Activated CD8-positive, alpha-beta T cell treated with anti-CD3 and anti-CD28 coated beads for 36 hours (primary cell): ENCODE measurements at regions of chr14 and their contacts with region 1.

Region 1: DNA sequence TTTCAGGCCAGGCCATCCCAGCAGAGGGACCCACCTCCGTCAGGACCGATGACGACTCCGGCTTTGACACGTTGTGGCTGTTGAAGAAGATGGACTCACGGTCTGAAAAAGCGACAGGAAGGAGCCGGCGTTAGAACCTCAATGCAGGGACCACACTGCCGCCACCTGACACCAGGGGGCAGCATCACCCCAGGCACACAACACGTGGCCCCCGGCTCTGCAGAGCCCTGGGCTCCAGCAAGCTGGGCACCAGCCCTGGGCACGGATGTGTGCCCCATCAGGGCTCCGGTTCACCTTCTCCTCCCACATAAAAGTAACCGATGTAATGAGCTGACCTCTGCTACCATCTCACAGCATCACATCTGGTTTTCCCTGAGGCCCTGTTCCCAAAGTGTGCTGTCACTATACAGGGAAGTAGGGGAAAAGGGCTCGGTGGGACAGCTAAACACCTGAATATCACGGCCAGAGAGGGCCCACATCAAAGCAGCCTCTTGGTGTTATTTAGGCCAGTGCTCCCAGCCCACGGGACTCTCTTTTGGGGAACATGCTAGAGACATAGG is 29.0 kb downstream of the CHGA start:
- DNase-seq: peak; percentile 90
- ATAC-seq: peak; percentile 99
- H3K4me3 Mint-ChIP-seq: no peak overlapping the region
- H3K27ac Mint-ChIP-seq: no peak overlapping the region
- H3K4me1 Mint-ChIP-seq: peaks cover 5% of the 10 kb centered on the region
- H3K27me3 Mint-ChIP-seq: no peaks in the 10 kb centered on the region
- CTCF ChIP-seq: peak; percentile 75

Region 2: DNA sequence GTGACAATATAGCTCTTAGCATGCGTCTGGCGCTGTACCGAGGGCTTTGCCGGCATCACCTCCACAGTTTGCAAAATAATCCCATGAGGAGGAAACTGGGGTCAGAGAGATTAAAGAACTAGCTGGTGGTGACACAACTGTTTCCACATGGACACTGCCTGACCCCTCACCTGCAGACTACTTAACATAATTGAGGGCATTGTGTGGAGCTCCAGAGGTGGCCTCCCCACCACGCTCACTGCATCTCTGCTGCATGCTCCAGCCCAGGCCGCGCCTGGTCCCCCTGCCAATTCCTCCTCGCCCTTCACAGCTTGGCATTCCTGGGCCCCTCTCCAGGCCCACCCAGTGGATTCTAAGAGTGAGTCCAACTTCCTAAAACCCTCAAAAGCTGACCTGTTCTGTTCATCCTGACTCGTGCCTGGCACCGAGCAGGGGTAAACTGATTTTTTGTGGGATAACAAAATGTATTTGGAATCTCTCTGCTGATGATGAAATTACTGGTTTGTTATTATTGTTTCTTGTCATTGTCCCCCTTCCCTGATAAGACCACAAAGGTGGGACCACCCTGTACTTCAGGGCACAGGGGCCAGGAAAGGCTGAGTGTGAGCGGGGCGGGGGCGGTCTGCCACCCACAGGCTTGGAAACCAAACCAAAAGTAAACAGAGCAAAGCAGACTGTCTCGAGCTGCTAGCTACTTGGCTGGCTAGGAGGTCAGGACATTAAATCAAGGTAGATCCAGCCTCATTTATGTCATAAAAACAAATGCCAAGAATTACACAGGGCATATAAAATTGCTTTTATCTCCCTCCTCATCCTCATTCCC is 11.5 kb after region 1 on chr14:
- CTCF ChIA-PET with region 1: interaction called, 21 read pairs
- POLR2A ChIA-PET with region 1: interaction called, 3 read pairs
- intact Hi-C with region 1: no loop called
- DNase-seq: no peak
- ATAC-seq: no peak
- H3K4me3 Mint-ChIP-seq: no peak overlapping the region
- H3K27ac Mint-ChIP-seq: peak overlapping the region; percentile 8
- H3K4me1 Mint-ChIP-seq: peaks cover 14% of the 10 kb centered on the region
- H3K27me3 Mint-ChIP-seq: no peaks in the 10 kb centered on the region
- CTCF ChIP-seq: no peak

Region 3: GRCh38 chr14:92969871-92970270 is 17.9 kb after region 1 on chr14:
- CTCF ChIA-PET with region 1: interaction called, 21 read pairs
- POLR2A ChIA-PET with region 1: interaction called, 3 read pairs
- intact Hi-C with region 1: no loop called
- DNase-seq: no peak
- ATAC-seq: no peak
- H3K4me3 Mint-ChIP-seq: no peak overlapping the region
- H3K27ac Mint-ChIP-seq: no peak overlapping the region
- H3K4me1 Mint-ChIP-seq: peaks cover 13% of the 10 kb centered on the region
- H3K27me3 Mint-ChIP-seq: no peaks in the 10 kb centered on the region
- CTCF ChIP-seq: no peak

Region 4: DNA sequence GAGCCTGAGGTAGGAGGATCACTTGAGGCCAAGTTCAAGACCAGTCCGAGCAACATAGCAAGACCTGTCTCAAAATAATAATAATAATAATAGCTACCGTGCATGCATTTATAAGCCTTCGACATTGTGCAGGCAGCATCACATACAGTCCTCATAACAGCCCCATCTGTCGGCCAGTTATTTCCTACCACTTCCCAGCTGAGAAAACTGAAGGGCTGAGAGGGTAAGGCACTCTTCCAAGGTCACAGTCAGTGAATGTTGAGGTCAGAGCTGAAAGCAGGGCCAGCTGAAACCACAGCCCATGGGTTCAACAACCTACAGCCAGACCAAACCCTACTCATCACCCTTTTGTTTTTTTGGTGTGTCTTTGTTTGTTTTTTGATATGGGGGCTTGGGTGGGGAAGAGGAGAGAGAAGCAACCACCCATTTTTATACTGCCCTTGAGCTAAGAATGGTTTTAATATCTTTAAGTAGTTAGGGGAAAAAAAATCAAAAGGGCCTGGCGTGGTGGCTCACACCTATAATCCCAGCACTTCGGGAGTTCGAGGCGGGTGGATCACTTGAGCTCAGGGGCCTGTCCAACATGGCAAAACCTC is 180.6 kb after region 1 on chr14:
- CTCF ChIA-PET with region 1: interaction called, 27 read pairs
- POLR2A ChIA-PET with region 1: no interaction called
- intact Hi-C with region 1: no loop called
- DNase-seq: peak; percentile 57
- ATAC-seq: peak; percentile 56
- H3K4me3 Mint-ChIP-seq: no peak overlapping the region
- H3K27ac Mint-ChIP-seq: no peak overlapping the region
- H3K4me1 Mint-ChIP-seq: no peaks in the 10 kb centered on the region
- H3K27me3 Mint-ChIP-seq: no peaks in the 10 kb centered on the region
- CTCF ChIP-seq: peak; percentile 47

Region 5: GRCh38 chr14:93137864-93138263 is 185.9 kb after region 1 on chr14:
- CTCF ChIA-PET with region 1: interaction called, 27 read pairs
- POLR2A ChIA-PET with region 1: no interaction called
- intact Hi-C with region 1: loop called (anchors 2 kb)
- DNase-seq: no peak
- ATAC-seq: no peak
- H3K4me3 Mint-ChIP-seq: no peak overlapping the region
- H3K27ac Mint-ChIP-seq: no peak overlapping the region
- H3K4me1 Mint-ChIP-seq: peaks cover 4% of the 10 kb centered on the region
- H3K27me3 Mint-ChIP-seq: no peaks in the 10 kb centered on the region
- CTCF ChIP-seq: no peak

Region 6: GRCh38 chr14:93146119-93146518 is 194.1 kb after region 1 on chr14:
- CTCF ChIA-PET with region 1: interaction called, 14 read pairs
- POLR2A ChIA-PET with region 1: no interaction called
- intact Hi-C with region 1: no loop called
- DNase-seq: no peak
- ATAC-seq: peak; percentile 55
- H3K4me3 Mint-ChIP-seq: no peak overlapping the region
- H3K27ac Mint-ChIP-seq: peak overlapping the region; percentile 1
- H3K4me1 Mint-ChIP-seq: no peaks in the 10 kb centered on the region
- H3K27me3 Mint-ChIP-seq: peaks cover 2% of the 10 kb centered on the region
- CTCF ChIP-seq: no peak